Tibial artery (tissue), 4 donors: ENCODE measurements at regions of chr1 and their contacts with region 1.

Region 1: GRCh38 chr1:83574791-83575190 is 424.1 kb downstream of the TTLL7 start:
- DNase-seq: no peak
- H3K4me3 ChIP-seq: no peak overlapping the region
- H3K27ac ChIP-seq: no peak overlapping the region
- H3K4me1 ChIP-seq: no peaks in the 10 kb centered on the region
- H3K27me3 ChIP-seq: no peaks in the 10 kb centered on the region
- CTCF ChIP-seq: no peak

Region 2: DNA sequence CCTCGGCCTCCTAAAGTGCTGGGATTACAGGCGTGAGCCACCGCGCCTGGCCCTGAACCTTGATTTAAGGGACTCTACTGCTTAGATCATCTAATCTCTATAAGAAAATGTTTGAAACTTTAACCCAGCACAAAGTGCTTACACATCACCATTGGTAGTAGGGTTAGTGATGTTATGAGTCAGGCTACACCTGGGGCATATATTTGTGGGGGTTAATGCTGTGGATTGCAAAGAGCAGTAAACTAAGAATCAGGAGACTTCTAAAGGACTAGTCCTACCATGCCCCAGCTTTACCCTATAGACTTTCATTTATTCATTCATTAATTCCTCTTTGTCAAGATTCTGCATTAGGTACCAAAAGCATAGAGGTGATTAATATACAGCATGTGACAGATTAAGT is 456.3 kb before region 1 on chr1:
- intact Hi-C with region 1: loop called (anchors 5 kb)
- DNase-seq: no peak
- H3K4me3 ChIP-seq: no peak overlapping the region
- H3K27ac ChIP-seq: no peak overlapping the region
- H3K4me1 ChIP-seq: no peaks in the 10 kb centered on the region
- H3K27me3 ChIP-seq: no peaks in the 10 kb centered on the region
- CTCF ChIP-seq: no peak

Region 3: DNA sequence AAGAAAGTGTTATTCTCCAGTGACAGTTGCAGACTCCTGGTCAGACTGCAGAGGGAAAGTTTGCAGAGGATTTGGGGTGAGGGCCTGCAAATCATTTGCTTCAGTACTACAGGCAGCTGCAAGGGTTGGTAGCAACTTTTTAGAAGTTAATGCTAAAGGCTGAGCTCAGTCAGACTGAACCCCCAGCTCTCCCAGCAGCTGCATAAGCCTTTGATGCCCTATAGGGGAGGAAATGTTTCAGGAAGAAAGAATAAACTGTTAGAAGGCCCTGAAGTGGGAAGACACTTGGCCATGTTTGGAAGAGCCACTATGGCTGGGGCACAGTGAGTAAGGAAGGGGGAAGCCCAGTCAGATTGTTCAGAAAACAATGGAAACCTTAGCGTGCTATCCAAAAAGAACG is 40.6 kb after region 1 on chr1:
- intact Hi-C with region 1: no loop called
- DNase-seq: no peak
- H3K4me3 ChIP-seq: no peak overlapping the region
- H3K27ac ChIP-seq: no peak overlapping the region
- H3K4me1 ChIP-seq: no peaks in the 10 kb centered on the region
- H3K27me3 ChIP-seq: no peaks in the 10 kb centered on the region
- CTCF ChIP-seq: no peak

Region 4: GRCh38 chr1:83626603-83627002 is 51.8 kb after region 1 on chr1:
- intact Hi-C with region 1: no loop called
- DNase-seq: no peak
- H3K4me3 ChIP-seq: no peak overlapping the region
- H3K27ac ChIP-seq: no peak overlapping the region
- H3K4me1 ChIP-seq: no peaks in the 10 kb centered on the region
- H3K27me3 ChIP-seq: no peaks in the 10 kb centered on the region
- CTCF ChIP-seq: no peak